ENCODE measurements at regions of chr4 and their contacts with region 1.

Region 1: DNA sequence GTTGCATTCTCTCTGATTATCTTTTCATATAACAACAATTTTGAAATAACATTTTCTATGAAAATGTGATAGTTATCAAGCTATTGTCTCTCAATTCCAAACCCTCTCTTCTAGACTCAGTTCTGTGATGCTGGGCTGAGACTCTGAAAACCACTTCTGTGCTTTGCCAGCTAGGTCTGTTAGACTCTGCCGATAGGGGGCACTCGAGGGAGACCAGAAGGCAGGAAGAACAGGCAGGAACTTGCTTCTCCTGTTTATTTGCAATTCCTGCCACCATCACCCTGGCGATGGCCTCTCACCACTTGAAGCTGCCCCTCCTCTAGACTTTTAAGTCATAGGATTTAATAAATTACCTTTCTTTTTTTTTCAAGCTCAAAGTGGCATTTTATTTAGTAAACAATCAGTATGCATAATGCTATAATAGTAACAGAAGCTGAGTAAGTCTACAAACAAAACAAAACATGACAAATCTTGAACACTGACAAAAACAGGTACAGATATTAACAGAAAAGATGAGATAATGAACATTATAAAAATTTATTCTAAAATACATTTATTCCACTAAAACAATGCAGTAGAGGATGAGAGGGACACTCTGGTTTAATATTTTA is 49.7 kb downstream of the RASL11B start:
- DNase-seq: peak; percentile 56
- ATAC-seq: 0 out of 2 replicates have a peak, but pooled peaks have one; percentile 22
- H3K4me3 ChIP-seq: no peak overlapping the region
- H3K27ac ChIP-seq: no peak overlapping the region
- H3K4me1 ChIP-seq: peaks cover 23% of the 10 kb centered on the region
- H3K27me3 ChIP-seq: no peaks in the 10 kb centered on the region
- CTCF ChIP-seq: peak; percentile 53
- POLR2A ChIP-seq: no peak
- RAD21 ChIP-seq: peak; percentile 37

Region 2: GRCh38 chr4:52721968-52722815 is 189.6 kb before region 1 on chr4:
- CTCF ChIA-PET with region 1: interaction called, 5 read pairs
- POLR2A ChIA-PET with region 1: no interaction called
- dilution Hi-C with region 1: no loop called
- in situ Hi-C with region 1: no loop called
- intact Hi-C with region 1: loop called (anchors 5 kb)
- DNase-seq: peak; percentile 97
- ATAC-seq: peak; percentile 97
- H3K4me3 ChIP-seq: peak overlapping the region; percentile 79
- H3K27ac ChIP-seq: peak overlapping the region; percentile 98
- H3K4me1 ChIP-seq: no peaks in the 10 kb centered on the region
- H3K27me3 ChIP-seq: no peaks in the 10 kb centered on the region
- CTCF ChIP-seq: no peak
- POLR2A ChIP-seq: peak; percentile 65; the same call in 1 of the 2 replicates
- RAD21 ChIP-seq: no peak

Region 3: DNA sequence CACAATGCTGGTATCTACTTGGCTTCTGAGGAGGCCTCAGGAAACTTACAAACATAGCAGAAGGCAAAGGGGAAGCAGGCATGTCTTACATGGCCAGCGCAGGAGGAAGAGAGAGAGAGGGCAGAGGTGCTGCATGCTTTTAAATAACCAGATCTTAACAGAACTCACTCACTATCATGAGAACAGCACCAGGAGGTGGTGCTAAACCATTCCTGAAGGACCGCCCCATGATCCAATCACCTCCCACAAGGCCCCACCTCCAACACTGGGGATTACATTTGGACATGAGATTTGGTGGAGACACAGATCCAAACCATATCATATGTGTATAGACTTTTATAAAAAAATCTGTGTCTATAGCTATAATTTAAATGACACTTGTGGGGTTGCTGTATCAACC is 112.0 kb before region 1 on chr4:
- CTCF ChIA-PET with region 1: no interaction called
- POLR2A ChIA-PET with region 1: no interaction called
- dilution Hi-C with region 1: no loop called
- in situ Hi-C with region 1: no loop called
- intact Hi-C with region 1: no loop called
- DNase-seq: no peak
- ATAC-seq: no peak
- H3K4me3 ChIP-seq: no peak overlapping the region
- H3K27ac ChIP-seq: no peak overlapping the region
- H3K4me1 ChIP-seq: no peaks in the 10 kb centered on the region
- H3K27me3 ChIP-seq: peaks cover 7% of the 10 kb centered on the region
- CTCF ChIP-seq: no peak
- POLR2A ChIP-seq: no peak
- RAD21 ChIP-seq: no peak

Region 4: DNA sequence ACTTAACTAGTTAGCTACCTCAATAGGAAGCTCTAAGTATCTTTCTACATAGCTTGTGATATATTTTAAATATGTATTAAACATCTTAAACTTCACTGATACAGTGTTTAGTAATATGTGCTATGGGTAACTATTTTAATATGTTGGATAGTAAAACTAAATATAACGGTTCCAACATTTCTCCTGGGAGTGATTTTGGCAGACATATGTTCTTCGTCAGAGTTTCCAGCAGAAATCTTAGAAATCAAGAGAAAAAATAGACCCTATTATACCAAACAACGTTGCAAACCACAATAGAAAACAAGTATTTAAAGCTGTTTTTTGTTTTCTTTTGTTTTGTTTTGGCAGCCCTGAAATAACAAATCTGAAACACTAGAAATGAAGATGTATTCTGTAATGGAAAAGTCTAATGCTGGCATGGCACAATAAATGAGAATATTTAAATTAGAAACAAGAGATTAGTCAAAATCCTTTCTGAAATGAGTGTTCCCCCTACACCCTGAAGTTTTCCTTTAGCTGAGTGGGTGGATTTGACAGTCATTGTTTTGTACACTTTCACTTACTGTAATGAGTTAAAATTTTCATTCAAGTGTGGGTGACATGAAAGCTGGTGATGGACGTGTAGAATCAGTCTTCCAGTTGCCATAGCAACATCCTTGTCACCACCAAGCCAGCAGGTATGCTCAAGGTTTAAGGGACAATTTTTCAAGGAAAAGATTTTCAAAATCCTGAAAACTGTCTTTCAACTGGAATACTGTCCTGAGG is 220.5 kb after region 1 on chr4:
- CTCF ChIA-PET with region 1: no interaction called
- POLR2A ChIA-PET with region 1: no interaction called
- dilution Hi-C with region 1: no loop called
- in situ Hi-C with region 1: no loop called
- intact Hi-C with region 1: no loop called
- DNase-seq: no peak
- ATAC-seq: no peak
- H3K4me3 ChIP-seq: no peak overlapping the region
- H3K27ac ChIP-seq: no peak overlapping the region
- H3K4me1 ChIP-seq: peaks cover 1% of the 10 kb centered on the region; the same call in 1 of the 2 replicates
- H3K27me3 ChIP-seq: no peaks in the 10 kb centered on the region
- CTCF ChIP-seq: no peak
- POLR2A ChIP-seq: no peak
- RAD21 ChIP-seq: no peak

Region 5: GRCh38 chr4:53465281-53465680 is 553.5 kb after region 1 on chr4:
- CTCF ChIA-PET with region 1: no interaction called
- POLR2A ChIA-PET with region 1: no interaction called
- dilution Hi-C with region 1: no loop called
- in situ Hi-C with region 1: no loop called
- intact Hi-C with region 1: no loop called
- DNase-seq: peak; percentile 31
- ATAC-seq: peak; percentile 29
- H3K4me3 ChIP-seq: no peak overlapping the region
- H3K27ac ChIP-seq: no peak overlapping the region
- H3K4me1 ChIP-seq: 0 out of 2 replicates have a peak, but pooled peaks cover 1% of the 10 kb centered on the region
- H3K27me3 ChIP-seq: no peaks in the 10 kb centered on the region
- CTCF ChIP-seq: no peak
- POLR2A ChIP-seq: no peak
- RAD21 ChIP-seq: no peak

Region 6: GRCh38 chr4:53541577-53542206 is 629.9 kb after region 1 on chr4:
- CTCF ChIA-PET with region 1: no interaction called
- POLR2A ChIA-PET with region 1: no interaction called
- dilution Hi-C with region 1: no loop called
- in situ Hi-C with region 1: no loop called
- intact Hi-C with region 1: no loop called
- DNase-seq: peak; percentile 95
- ATAC-seq: peak; percentile 87
- H3K4me3 ChIP-seq: no peak overlapping the region
- H3K27ac ChIP-seq: peak overlapping the region; percentile 50; the same call in 1 of the 2 replicates
- H3K4me1 ChIP-seq: peaks cover 17% of the 10 kb centered on the region
- H3K27me3 ChIP-seq: no peaks in the 10 kb centered on the region
- CTCF ChIP-seq: no peak
- POLR2A ChIP-seq: no peak
- RAD21 ChIP-seq: no peak